ENCODE measurements at regions of chr18 and their contacts with region 1.

Region 1: GRCh38 chr18:58768293-58768974 is 96.2 kb upstream of the ZNF532 start:
- H3K4me3 ChIP-seq: peak overlapping the region; percentile 22
- H3K27ac ChIP-seq: no peak overlapping the region
- H3K4me1 ChIP-seq: peaks cover 2% of the 10 kb centered on the region; the same call in 1 of the 2 replicates
- CTCF ChIP-seq: peak; percentile 96

Region 2: GRCh38 chr18:58520969-58521368 is 247.5 kb before region 1 on chr18:
- CTCF ChIA-PET with region 1: interaction called, 363 read pairs
- POLR2A ChIA-PET with region 1: no interaction called
- H3K4me3 ChIP-seq: no peak overlapping the region
- H3K27ac ChIP-seq: no peak overlapping the region
- H3K4me1 ChIP-seq: no peaks in the 10 kb centered on the region
- CTCF ChIP-seq: no peak

Region 3: DNA sequence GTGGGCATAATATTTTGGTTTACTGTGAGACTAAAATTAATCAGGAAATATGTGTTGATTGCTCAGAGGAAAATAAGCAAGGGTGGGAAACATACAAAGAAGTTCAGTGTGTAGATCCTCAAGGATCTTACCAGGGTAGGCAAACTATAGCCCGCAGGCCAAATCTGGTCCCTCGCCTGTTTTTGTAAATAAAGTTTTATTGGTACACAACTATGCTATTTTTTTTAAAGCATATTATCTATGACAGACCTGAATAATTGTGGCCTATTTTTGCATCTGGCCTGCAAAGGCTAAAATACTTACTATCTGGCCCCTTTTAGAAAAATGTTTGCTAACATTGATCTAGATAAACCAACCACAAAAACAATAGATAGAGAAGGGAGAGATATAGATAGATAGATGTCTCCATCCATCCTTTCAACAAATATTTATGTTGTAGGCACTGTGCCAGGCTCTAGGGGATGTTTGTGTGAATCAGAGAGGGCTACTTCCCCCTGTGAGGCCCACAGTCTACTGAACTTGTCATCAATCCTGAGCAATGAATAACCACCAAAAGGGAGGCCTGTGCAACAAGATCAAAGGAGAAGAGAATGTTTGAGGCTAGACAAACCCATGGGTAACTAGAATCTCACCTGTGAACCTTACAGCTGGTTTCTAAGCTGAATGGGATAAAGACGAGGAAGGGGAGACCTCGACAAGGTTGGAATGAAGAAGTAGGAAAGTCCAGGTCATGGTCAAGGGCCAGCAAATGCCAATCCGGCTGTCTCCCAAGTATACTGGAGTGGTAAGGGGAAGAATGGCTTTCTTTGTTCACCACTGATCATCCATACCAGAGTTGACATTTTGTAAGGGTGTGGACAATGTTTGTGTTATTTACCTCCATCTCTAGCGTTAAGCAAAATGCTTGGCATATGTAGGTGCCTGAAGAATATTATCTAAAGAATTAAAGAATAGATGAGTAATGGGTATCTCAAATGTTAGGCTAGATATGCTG is 163.1 kb before region 1 on chr18:
- CTCF ChIA-PET with region 1: interaction called, 13 read pairs
- POLR2A ChIA-PET with region 1: no interaction called
- H3K4me3 ChIP-seq: no peak overlapping the region
- H3K27ac ChIP-seq: peak overlapping the region; percentile 2; the same call in 1 of the 2 replicates
- H3K4me1 ChIP-seq: peaks cover 30% of the 10 kb centered on the region
- CTCF ChIP-seq: no peak

Region 4: GRCh38 chr18:58745914-58746313 is 22.5 kb before region 1 on chr18:
- CTCF ChIA-PET with region 1: interaction called, 37 read pairs
- POLR2A ChIA-PET with region 1: no interaction called
- H3K4me3 ChIP-seq: no peak overlapping the region
- H3K27ac ChIP-seq: no peak overlapping the region
- H3K4me1 ChIP-seq: no peaks in the 10 kb centered on the region
- CTCF ChIP-seq: no peak

Region 5: GRCh38 chr18:58829263-58829662 is 60.8 kb after region 1 on chr18:
- CTCF ChIA-PET with region 1: no interaction called
- POLR2A ChIA-PET with region 1: no interaction called
- H3K4me3 ChIP-seq: no peak overlapping the region
- H3K27ac ChIP-seq: no peak overlapping the region
- H3K4me1 ChIP-seq: no peaks in the 10 kb centered on the region; the same call in 1 of the 2 replicates
- CTCF ChIP-seq: no peak

Region 6: DNA sequence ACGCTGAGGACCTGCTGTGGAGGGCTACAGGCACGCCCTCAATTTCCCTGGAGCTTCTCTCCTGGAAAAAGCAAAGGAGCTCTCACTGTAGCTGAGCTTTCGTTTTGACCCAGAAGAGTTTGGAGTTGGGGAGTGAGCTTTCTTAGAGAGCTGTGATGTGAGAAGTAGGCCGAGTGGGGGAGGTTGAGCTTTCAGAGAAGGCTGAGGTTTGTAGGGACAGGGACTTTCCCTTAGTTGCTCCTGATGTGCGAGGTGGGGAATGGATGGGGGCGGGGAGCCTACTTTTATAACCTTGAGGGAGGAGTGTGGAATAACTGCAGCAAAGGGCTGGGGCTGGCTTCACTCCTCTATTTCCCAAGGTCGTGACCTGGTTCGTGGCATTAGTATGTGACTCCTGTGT is 143.3 kb after region 1 on chr18:
- CTCF ChIA-PET with region 1: no interaction called
- POLR2A ChIA-PET with region 1: no interaction called
- H3K4me3 ChIP-seq: no peak overlapping the region
- H3K27ac ChIP-seq: no peak overlapping the region
- H3K4me1 ChIP-seq: no peaks in the 10 kb centered on the region
- CTCF ChIP-seq: no peak

Region 7: DNA sequence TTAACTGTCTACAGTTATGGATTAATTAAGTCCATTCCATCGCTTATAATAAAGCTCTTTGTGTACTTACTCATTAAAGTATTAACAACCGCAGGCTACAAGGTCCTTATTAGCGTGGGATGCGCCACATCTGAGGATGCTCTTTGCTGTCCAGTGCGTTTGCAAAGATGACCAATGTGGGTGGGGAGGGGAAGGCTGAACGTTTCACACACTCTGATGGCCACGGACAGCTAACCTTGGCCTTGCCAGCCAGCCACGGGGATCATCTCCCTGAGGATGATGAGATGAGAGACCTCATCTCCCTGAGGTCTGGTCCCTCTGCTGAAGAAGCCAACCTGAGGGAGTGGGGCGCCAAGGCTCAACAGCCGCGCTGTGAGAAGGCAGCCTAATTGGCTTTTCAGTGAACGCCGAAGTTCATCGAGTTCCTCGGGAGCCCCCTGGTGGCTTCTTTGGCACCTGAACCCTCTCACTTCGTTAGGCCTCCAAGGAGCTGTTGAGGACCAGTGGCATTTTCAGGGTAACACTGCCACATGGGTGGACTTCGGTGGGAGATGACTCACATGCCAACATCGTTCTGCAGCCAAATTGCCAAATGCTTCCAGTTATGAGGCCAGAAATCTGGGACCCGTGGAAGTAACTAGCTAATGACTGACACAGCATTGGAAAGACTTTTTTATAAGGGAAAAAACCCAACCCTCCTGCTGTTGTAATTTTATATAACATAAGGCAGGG is 301.9 kb after region 1 on chr18:
- CTCF ChIA-PET with region 1: interaction called, 155 read pairs
- POLR2A ChIA-PET with region 1: interaction called, 3 read pairs
- H3K4me3 ChIP-seq: no peak overlapping the region
- H3K27ac ChIP-seq: no peak overlapping the region
- H3K4me1 ChIP-seq: peaks cover 9% of the 10 kb centered on the region
- CTCF ChIP-seq: peak; percentile 91

Region 8: GRCh38 chr18:59249205-59249774 is 480.9 kb after region 1 on chr18:
- CTCF ChIA-PET with region 1: interaction called, 14 read pairs
- POLR2A ChIA-PET with region 1: no interaction called
- H3K4me3 ChIP-seq: no peak overlapping the region
- H3K27ac ChIP-seq: no peak overlapping the region
- H3K4me1 ChIP-seq: no peaks in the 10 kb centered on the region; the same call in 1 of the 2 replicates
- CTCF ChIP-seq: peak; percentile 48; the same call in 1 of the 2 replicates

Measured in HEK293 (cell line).